Stomach (tissue), 19 donors: ENCODE measurements at regions of chr3 and their contacts with region 1.

Region 1: DNA sequence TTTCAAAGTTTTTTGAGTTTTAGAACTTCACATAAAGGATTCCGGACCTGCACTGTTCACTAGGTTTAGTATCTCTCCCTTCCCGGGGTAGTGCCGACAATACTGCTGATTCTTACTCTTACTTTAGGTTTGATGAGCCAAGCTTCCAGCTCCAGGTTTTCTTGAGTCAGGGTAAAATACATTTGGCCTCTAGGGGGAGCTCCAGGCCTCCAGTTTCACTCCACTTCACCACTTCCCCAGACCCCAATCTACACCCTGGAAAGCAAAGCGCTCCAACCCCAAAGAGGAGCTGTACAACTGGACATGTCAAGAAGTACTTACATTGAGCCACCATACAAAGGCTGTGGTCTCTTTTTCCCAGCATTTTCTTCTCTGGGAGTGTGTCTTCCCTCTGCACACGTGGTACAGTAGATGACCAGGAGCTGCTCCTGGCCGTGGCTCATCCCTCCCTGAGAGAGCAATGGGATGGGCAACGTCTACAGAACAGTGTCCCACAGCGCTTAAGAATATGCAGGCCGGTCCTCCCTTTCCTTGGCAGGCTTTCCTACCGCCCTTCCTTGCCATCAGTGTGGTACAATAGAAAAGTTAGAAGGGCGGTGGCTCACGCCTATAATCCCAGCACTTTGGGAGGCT is 93.9 kb upstream of the CCDC80 start:
- DNase-seq: peak; percentile 65 to 79
- H3K4me3 ChIP-seq: no peak overlapping the region
- H3K27ac ChIP-seq: no peak overlapping the region
- H3K4me1 ChIP-seq: peaks cover 0 to 6% (median 0%) of the 10 kb centered on the region in 4 donors
- H3K27me3 ChIP-seq: no peaks in the 10 kb centered on the region
- CTCF ChIP-seq: peak in 5 of 7 experiments; percentile 44 to 77 (median 65)
- EP300 ChIP-seq: no peak
- POLR2A ChIP-seq: no peak

Region 2: GRCh38 chr3:112550859-112551258 is 184.0 kb before region 1 on chr3:
- intact Hi-C with region 1: no loop called
- DNase-seq: no peak
- H3K4me3 ChIP-seq: no peak overlapping the region
- H3K27ac ChIP-seq: no peak overlapping the region
- H3K4me1 ChIP-seq: peaks cover 0 to 36% (median 17%) of the 10 kb centered on the region in 4 donors
- H3K27me3 ChIP-seq: no peaks in the 10 kb centered on the region
- CTCF ChIP-seq: no peak
- EP300 ChIP-seq: no peak
- POLR2A ChIP-seq: no peak

Region 3: DNA sequence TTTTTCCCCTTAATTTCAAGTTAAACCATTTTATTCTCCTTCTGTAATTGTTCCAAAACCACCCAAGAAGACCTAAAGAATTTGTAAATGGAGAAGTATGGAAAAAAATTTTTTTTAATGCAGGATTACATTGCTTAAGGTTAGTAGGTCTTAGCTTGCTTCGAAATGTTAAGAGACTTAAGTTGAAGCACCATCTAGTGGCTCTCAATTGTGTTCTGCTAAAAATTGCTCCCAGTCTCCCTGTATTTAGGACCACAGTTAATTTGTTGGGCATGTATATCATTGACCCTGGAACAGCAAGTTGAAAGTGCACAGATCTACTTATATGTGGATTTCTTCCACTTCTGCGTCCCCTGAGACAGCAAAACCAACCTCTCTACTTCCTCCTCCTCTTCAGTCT is 79.4 kb after region 1 on chr3:
- intact Hi-C with region 1: loop called (anchors 10 kb)
- DNase-seq: peak in 1 of 2 donors; percentile 72
- H3K4me3 ChIP-seq: no peak overlapping the region
- H3K27ac ChIP-seq: peak overlapping the region in 3 of 5 donors; percentile 37 to 73 (median 53)
- H3K4me1 ChIP-seq: peaks cover 0 to 32% (median 16%) of the 10 kb centered on the region in 4 donors
- H3K27me3 ChIP-seq: no peaks in the 10 kb centered on the region
- CTCF ChIP-seq: peak in 4 of 7 experiments; percentile 10 to 41 (median 34)
- EP300 ChIP-seq: no peak
- POLR2A ChIP-seq: no peak

Region 4: DNA sequence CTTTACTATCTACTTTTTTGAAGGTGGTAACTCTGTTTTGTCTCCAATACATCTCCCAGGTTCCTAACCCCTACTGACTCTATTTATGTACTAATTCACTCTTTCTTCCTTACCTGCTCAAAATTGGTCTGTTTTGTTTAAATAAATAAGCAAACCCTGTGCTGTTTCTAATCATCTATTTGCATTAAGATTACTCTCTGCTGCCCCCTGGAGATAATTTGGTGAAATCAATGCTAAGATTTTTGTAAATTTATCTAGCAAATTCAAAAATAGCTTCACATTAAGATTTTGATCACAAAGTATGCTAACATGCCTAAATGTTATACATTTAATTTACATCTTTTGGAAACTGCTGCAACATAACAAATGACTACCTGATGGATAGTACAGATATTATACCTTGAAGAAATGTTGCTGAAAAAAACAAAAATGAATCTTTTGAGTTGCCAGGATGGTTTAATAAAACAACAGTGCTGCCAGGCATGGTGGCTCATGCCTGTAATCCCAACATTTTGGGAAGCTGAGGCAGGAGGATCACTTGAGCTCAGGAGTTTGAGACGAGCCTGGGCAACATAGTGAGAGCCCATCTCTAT is 244.5 kb after region 1 on chr3:
- intact Hi-C with region 1: loop called (anchors 10 kb)
- DNase-seq: peak in 1 of 2 donors; percentile 65
- H3K4me3 ChIP-seq: no peak overlapping the region
- H3K27ac ChIP-seq: no peak overlapping the region
- H3K4me1 ChIP-seq: peaks cover 0 to 3% (median 1%) of the 10 kb centered on the region in 4 donors
- H3K27me3 ChIP-seq: no peaks in the 10 kb centered on the region
- CTCF ChIP-seq: peak in 4 of 7 experiments; percentile 43 to 75 (median 62)
- EP300 ChIP-seq: no peak
- POLR2A ChIP-seq: no peak